ENCODE measurements at regions of chr16 and their contacts with region 1.

Region 1: DNA sequence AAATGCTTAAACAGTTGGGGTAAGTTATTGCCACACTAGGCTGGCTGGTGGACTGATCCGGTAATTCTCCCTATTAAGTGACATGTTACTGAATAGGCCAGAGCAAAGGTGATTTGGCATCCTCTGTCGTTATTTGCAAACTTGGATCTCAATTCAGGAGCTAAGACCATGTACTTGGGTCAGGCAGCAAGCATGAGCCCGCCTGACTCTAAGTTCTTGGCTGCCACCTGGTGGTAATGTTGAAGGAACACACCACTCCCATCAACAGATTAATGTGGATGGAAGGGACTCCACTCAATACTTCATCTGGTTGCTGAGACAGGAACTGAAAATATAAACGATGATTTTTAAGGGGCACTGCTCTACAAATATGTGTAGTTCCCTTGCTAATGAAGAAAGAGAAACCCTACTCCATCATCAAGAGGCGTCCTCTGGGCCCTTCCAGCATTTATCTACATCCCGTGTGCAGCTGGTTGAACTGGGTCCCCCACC is 70.8 kb downstream of the EMP2 start:
- DNase-seq: peak; percentile 83
- H3K4me3 ChIP-seq: no peak overlapping the region
- H3K27ac ChIP-seq: no peak overlapping the region
- H3K4me1 ChIP-seq: no peaks in the 10 kb centered on the region
- H3K27me3 ChIP-seq: no peaks in the 10 kb centered on the region
- CTCF ChIP-seq: peak; percentile 78

Region 2: DNA sequence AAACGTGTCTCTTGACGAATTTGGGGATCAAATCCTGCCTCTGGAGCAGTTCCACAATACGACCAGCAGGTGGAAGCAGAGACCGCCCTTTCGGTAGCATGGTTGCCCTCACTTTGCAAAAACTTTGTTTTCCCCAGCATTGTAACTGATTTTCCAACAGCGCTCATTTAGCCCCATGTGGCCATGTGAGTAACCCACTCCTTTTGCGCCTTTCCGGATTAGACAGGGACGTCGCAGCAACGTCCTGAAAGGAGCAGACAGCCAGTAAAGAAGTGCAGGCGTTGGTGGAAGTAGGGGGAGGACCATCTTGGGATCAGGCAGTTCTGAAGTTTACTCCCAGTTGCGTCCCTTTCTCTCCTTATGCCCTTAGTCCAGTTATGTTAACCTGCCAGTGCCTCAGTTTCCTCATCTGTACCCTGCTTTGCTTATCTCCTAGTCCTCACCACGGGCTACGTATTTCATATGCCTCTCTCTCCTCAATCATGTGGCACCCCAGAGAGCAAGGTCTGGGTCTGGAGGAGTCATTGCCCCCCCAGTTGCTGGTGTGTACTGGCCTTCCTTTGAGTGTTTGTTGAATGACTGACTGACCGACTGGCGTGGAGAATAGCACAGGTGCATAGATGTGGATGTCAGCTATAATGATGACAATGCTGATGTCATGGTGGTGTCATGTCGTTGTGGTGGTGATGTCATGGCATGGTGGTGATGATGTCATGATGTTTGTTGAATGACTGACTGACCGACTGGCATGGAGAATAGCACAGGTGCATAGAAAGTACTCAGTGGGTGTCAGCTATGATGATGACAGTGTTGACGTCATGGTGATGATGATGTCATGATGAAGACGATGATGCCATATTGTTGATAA is 1941.6 kb before region 1 on chr16:
- CTCF ChIA-PET with region 1: no interaction called
- POLR2A ChIA-PET with region 1: no interaction called
- intact Hi-C with region 1: loop called (anchors 5 kb)
- DNase-seq: peak; percentile 98
- H3K4me3 ChIP-seq: no peak overlapping the region
- H3K27ac ChIP-seq: peak overlapping the region; percentile 100
- H3K4me1 ChIP-seq: peaks cover 43% of the 10 kb centered on the region
- H3K27me3 ChIP-seq: no peaks in the 10 kb centered on the region
- CTCF ChIP-seq: peak; percentile 99

Region 3: DNA sequence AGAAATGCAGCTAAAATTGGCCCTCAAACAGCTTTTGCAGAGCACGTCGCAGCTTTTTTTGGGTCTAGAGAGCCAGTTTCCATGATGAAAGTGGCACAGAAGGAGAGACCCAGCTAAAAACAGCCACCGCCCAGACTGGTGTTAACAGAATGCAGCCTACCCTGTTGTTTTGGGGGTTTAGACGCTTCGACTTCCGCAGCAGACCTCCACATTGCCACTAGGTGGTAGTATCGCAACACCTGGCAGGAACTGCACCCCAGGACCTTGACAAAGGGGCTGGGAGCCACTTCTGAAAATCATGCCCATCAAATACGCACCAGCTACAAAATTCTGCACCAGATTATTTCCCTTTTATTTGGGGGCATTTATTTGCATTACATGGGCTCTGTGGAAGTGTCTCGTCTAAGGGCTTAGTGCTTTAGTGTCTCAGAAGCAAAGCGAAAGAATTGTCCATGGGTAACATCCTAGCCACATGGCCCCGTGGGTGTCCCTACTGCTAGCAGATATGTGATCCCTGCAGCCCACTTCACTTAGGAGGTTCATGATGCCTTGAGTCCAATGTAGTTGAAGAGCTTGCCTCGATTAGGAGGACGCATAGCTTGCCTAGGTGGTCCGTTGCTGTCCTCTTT is 1251.0 kb before region 1 on chr16:
- CTCF ChIA-PET with region 1: interaction called, 3 read pairs
- POLR2A ChIA-PET with region 1: no interaction called
- intact Hi-C with region 1: loop called (anchors 10 kb)
- DNase-seq: peak; percentile 68
- H3K4me3 ChIP-seq: no peak overlapping the region
- H3K27ac ChIP-seq: no peak overlapping the region
- H3K4me1 ChIP-seq: no peaks in the 10 kb centered on the region
- H3K27me3 ChIP-seq: no peaks in the 10 kb centered on the region
- CTCF ChIP-seq: peak; percentile 85

Region 4: GRCh38 chr16:10314811-10315210 is 194.8 kb before region 1 on chr16:
- CTCF ChIA-PET with region 1: interaction called, 17 read pairs
- POLR2A ChIA-PET with region 1: no interaction called
- intact Hi-C with region 1: loop called (anchors 1 kb)
- DNase-seq: peak; percentile 41
- H3K4me3 ChIP-seq: no peak overlapping the region
- H3K27ac ChIP-seq: no peak overlapping the region
- H3K4me1 ChIP-seq: no peaks in the 10 kb centered on the region
- H3K27me3 ChIP-seq: no peaks in the 10 kb centered on the region
- CTCF ChIP-seq: peak; percentile 44; the same call in 1 of the 2 replicates

Region 5: DNA sequence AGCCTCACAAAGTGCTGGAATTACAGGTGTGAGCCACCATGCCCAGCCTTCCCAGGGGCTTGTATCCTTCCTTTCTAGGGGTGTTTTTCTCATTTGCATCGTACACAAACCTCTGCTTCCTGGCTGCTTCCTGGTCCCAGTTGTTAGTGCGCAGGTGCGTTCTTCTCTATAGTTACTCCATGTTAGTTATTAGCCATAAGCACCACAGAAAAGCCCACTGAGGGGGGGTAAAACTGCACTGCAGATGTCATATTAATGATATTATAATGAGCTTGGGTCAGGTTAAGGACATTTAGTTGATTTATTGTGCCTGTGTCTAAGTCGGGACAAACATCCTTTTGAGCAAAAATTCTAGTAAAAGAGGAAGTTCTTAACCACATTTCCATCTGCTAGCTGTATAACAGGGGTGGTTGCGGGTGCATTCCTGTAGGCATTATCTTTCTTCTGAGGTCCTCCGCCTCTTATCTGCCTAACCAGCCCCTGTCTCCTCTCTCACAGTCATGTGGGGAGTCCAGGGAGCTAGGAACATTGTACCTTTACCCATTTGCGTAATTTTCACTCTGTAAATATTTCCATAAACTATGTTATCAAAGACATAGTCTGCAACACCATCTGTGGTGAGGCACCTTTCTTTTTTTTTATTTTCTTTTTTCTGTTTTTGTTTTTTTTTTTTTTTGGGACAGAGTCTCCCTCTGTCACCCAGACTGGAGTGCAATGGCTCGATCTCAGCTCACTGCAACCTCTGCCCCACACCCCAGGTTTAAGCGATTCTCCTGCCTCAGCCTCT is 147.3 kb before region 1 on chr16:
- CTCF ChIA-PET with region 1: no interaction called
- POLR2A ChIA-PET with region 1: no interaction called
- intact Hi-C with region 1: no loop called
- DNase-seq: no peak
- H3K4me3 ChIP-seq: no peak overlapping the region
- H3K27ac ChIP-seq: no peak overlapping the region
- H3K4me1 ChIP-seq: no peaks in the 10 kb centered on the region
- H3K27me3 ChIP-seq: peaks cover 14% of the 10 kb centered on the region
- CTCF ChIP-seq: no peak

Region 6: DNA sequence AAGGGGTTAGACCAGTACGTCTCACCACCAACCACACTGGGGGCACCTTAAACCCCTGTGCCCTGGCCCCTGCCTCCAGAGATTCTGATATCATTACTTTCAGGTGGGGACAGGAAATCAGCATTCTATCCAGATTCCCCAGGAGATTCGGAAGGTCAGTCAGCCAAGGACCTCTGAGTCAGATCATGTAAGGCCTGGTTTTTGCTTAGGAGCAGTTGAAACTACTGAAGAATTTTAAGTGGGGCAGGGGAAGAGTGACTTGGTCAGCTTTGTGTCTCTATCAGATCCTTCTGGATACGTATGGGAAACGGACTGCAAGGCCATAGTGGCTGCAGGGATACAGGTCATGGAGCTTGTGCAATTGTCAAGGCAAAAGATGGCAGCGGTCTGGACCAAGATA is 61.8 kb after region 1 on chr16:
- CTCF ChIA-PET with region 1: interaction called, 10 read pairs
- POLR2A ChIA-PET with region 1: no interaction called
- intact Hi-C with region 1: no loop called
- DNase-seq: no peak
- H3K4me3 ChIP-seq: no peak overlapping the region
- H3K27ac ChIP-seq: no peak overlapping the region
- H3K4me1 ChIP-seq: no peaks in the 10 kb centered on the region
- H3K27me3 ChIP-seq: no peaks in the 10 kb centered on the region
- CTCF ChIP-seq: no peak

Region 7: GRCh38 chr16:10918294-10919002 is 408.9 kb after region 1 on chr16:
- CTCF ChIA-PET with region 1: no interaction called
- POLR2A ChIA-PET with region 1: no interaction called
- intact Hi-C with region 1: loop called (anchors 2 kb)
- DNase-seq: peak; percentile 88
- H3K4me3 ChIP-seq: no peak overlapping the region
- H3K27ac ChIP-seq: no peak overlapping the region
- H3K4me1 ChIP-seq: no peaks in the 10 kb centered on the region
- H3K27me3 ChIP-seq: no peaks in the 10 kb centered on the region
- CTCF ChIP-seq: peak; percentile 89

Measured in A673 (cell line).